ENCODE measurements at regions of chrX and their contacts with region 1.

Region 1: DNA sequence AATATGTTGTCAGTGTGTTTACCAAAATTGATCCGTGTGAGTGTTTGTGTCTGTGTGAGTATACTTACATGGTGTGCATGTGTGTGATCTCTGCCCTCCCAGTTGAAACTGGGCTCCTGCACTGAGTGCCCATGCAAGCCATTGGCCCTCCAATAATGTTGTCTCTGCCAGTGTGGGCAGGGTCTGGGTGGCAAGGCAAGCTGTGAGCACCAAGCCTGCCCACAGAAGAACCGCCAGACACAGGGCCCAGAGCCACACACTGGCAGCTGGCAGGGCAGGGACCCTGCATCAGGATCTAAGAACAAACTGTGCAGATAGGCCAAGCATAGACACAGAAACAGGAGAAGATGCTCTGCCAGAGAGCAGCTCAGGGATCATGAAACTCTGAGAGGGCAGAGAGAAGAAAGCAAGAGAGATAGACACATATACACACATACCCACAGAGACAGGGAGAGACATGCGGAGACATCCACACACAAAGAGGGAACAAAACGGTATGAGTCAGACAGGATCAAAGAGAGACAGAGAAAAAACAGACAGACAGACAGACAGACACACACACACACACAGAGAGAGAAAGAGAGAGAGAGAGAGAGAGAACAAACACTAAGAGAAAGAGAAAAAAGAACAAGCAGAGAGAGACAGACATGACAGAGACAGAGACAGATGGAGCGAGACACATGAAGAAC is 555.0 kb downstream of the MID1IP1 start:
- DNase-seq: no peak
- H3K4me3 Mint-ChIP-seq: no peak overlapping the region
- H3K27ac Mint-ChIP-seq: peak overlapping the region; percentile 31
- H3K4me1 Mint-ChIP-seq: peaks cover 7% of the 10 kb centered on the region
- H3K27me3 Mint-ChIP-seq: no peaks in the 10 kb centered on the region

Region 2: GRCh38 chrX:39381422-39381821 is 25.2 kb after region 1 on chrX:
- intact Hi-C with region 1: loop called (anchors 1 kb)
- DNase-seq: no peak
- H3K4me3 Mint-ChIP-seq: no peak overlapping the region
- H3K27ac Mint-ChIP-seq: no peak overlapping the region
- H3K4me1 Mint-ChIP-seq: peaks cover 2% of the 10 kb centered on the region
- H3K27me3 Mint-ChIP-seq: no peaks in the 10 kb centered on the region

Region 3: GRCh38 chrX:39795605-39796004 is 439.3 kb after region 1 on chrX:
- intact Hi-C with region 1: no loop called
- DNase-seq: no peak
- H3K4me3 Mint-ChIP-seq: no peak overlapping the region
- H3K27ac Mint-ChIP-seq: no peak overlapping the region
- H3K4me1 Mint-ChIP-seq: no peaks in the 10 kb centered on the region
- H3K27me3 Mint-ChIP-seq: no peaks in the 10 kb centered on the region